CD8-positive, alpha-beta T cell (primary cell): ENCODE measurements at regions of chr1 and their contacts with region 1.

Region 1: GRCh38 chr1:48109390-48110013 is 112.3 kb upstream of the TRABD2B start:
- DNase-seq: peak in 2 of 9 experiments; percentile 37 to 50
- ATAC-seq: no peak
- H3K4me3 ChIP-seq: no peak overlapping the region
- H3K4me3 Mint-ChIP-seq: no peak overlapping the region
- H3K27ac ChIP-seq: no peak overlapping the region
- H3K27ac Mint-ChIP-seq: no peak overlapping the region
- H3K4me1 ChIP-seq: no peaks in the 10 kb centered on the region
- H3K4me1 Mint-ChIP-seq: no peaks in the 10 kb centered on the region
- H3K27me3 ChIP-seq: no peaks in the 10 kb centered on the region
- H3K27me3 Mint-ChIP-seq: peaks cover 14% of the 10 kb centered on the region
- CTCF ChIP-seq: peak; percentile 60

Region 2: DNA sequence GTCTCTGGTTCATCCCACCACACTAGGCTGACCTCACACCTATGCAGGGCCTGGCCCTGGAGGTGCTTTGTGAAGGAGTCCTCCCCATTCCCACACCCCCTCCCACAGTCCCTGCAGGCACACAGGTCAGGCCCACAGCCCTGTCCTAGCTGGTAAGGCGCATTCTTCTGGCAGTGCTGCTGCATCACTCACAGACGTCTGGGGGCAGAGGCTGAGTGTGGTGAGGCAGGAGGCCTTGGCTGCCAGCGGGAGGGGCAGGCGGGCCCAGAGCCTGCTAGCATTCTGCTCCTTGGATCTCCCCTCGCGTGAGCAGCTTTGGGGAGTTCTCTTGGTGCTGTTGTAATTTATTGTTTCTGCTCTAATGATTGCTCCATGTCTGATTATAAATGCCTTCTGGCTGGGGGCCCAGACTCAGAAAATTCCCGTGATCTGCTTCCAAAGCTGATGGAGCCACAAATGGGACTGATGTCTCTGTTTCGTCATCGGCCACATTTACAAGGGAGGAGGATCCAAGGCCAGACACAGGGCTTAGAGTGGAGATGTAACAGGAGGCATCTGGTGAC is 175.2 kb before region 1 on chr1:
- CTCF ChIA-PET with region 1: no interaction called
- POLR2A ChIA-PET with region 1: no interaction called
- intact Hi-C with region 1: no loop called
- DNase-seq: no peak
- ATAC-seq: no peak
- H3K4me3 ChIP-seq: no peak overlapping the region
- H3K4me3 Mint-ChIP-seq: no peak overlapping the region
- H3K27ac ChIP-seq: no peak overlapping the region
- H3K27ac Mint-ChIP-seq: no peak overlapping the region
- H3K4me1 ChIP-seq: no peaks in the 10 kb centered on the region
- H3K4me1 Mint-ChIP-seq: no peaks in the 10 kb centered on the region
- H3K27me3 ChIP-seq: peaks cover 0 to 3% of the 10 kb centered on the region in 2 experiments
- H3K27me3 Mint-ChIP-seq: peaks cover 11% of the 10 kb centered on the region
- CTCF ChIP-seq: no peak

Region 3: DNA sequence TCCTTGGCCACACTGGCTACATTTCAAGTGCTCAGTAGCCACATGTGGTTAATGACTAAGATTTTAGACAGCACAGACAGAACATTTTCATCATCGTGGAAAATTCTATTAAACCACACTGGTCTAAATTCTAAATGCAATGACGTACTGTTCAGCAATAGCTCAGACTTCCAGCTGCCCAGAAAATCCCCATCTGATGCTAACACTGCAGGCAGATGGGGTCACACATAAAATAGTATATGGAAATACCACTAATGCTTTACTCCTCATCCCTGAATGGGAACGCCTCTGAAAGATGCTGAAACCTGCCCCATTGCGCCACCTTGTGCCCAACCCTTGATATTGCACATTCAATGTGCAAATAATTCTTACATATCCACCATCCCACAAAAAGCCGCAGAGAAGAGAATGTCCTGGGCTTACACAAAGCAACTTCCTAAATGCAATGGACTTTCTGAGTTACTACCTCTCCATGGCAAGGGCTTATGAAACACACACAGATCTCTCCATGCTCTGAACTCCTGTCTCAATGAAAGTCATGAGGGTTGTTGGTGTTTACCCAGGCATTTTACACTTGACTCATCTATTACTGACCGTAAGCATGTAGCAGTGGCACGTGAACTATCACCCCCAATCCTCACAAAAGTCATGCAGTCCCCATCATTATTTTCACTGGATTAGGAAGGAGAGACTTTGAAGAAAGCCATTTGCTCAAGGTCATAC is 92.7 kb after region 1 on chr1:
- CTCF ChIA-PET with region 1: interaction called, 5 read pairs
- POLR2A ChIA-PET with region 1: no interaction called
- intact Hi-C with region 1: loop called in 1 of 2 experiments (anchors 1 kb)
- DNase-seq: peak; percentile 18 to 67 (median 53)
- ATAC-seq: no peak
- H3K4me3 ChIP-seq: no peak overlapping the region
- H3K4me3 Mint-ChIP-seq: no peak overlapping the region
- H3K27ac ChIP-seq: no peak overlapping the region
- H3K27ac Mint-ChIP-seq: no peak overlapping the region
- H3K4me1 ChIP-seq: no peaks in the 10 kb centered on the region
- H3K4me1 Mint-ChIP-seq: no peaks in the 10 kb centered on the region
- H3K27me3 ChIP-seq: no peaks in the 10 kb centered on the region
- H3K27me3 Mint-ChIP-seq: peaks cover 7% of the 10 kb centered on the region
- CTCF ChIP-seq: peak; percentile 95

Region 4: DNA sequence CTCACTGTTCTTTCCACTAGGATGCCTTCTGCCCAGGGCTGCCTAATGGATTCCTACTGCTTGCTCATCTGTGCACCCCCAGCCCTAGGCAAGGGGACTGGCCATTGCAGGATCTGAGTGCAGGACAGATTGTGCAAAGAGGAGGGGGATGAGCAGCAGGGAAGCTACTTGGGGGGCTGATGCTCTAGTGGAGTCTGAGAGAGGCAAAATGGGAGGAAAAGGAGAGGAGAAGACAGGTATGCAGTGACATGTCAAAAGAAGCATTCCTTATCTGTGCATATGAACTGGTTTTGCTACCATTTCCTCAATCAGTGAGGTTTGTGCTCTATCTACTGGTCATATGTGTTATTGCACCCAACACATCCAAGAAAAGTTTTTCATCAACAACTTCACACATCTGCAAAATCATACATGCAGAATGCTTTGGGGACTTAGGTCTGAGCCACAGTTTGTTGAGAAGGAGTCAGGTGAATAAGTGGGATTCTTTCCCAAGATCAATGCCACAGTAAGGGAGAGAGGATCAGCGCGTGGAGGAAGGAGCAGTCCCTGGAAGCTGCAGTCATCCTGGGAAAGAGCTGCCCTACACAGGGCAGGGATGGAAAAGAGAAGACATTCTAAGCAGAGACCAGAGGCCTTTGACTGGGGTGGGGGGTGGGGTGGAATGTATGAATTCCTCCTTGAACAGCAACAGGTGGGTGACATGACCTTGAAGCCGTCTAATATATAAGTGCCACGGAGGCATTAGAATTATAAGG is 127.4 kb after region 1 on chr1:
- CTCF ChIA-PET with region 1: interaction called, 20 read pairs
- POLR2A ChIA-PET with region 1: no interaction called
- intact Hi-C with region 1: loop called (anchors 1 to 5 kb)
- DNase-seq: peak in 2 of 9 experiments; percentile 53 to 63
- ATAC-seq: peak; percentile 34
- H3K4me3 ChIP-seq: no peak overlapping the region
- H3K4me3 Mint-ChIP-seq: no peak overlapping the region
- H3K27ac ChIP-seq: no peak overlapping the region
- H3K27ac Mint-ChIP-seq: no peak overlapping the region
- H3K4me1 ChIP-seq: no peaks in the 10 kb centered on the region
- H3K4me1 Mint-ChIP-seq: no peaks in the 10 kb centered on the region
- H3K27me3 ChIP-seq: no peaks in the 10 kb centered on the region
- H3K27me3 Mint-ChIP-seq: no peaks in the 10 kb centered on the region
- CTCF ChIP-seq: peak; percentile 79

Region 5: DNA sequence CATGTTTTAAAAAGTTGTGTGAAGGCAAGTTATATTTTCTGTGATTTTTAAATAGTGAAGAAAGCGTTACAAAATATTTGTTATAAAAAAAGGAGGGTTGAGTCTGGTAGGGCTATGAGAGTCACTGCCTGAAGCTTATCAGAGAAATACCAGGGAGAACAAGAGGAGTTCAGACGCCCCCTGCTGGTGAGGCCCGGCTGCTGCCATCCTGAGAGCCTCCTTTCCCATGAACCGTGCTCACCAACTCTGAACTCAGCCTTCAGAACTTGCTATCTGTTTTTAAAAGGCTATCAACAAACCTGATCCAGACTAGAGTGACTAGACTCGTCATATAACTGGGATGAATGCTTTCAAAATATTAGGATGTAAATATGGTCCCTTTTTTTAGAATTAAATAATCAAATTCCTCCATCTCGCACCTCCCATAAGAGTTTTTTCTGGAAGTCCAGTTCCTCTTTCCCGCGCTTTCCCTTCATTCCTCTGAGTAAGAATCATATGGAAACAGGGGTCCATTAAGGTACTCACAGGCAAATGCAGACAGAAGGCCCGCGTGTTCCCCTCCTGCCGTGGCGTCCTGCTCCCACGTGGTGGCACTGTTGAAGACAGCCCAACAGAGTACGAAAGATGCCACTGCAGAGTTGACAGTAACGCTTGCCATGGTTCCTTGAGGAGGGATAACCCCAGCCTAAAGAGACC is 388.7 kb after region 1 on chr1:
- CTCF ChIA-PET with region 1: interaction called, 3 read pairs
- POLR2A ChIA-PET with region 1: no interaction called
- intact Hi-C with region 1: loop called in 1 of 2 experiments (anchors 2 kb)
- DNase-seq: peak; percentile 28 to 76 (median 65)
- ATAC-seq: peak; percentile 75
- H3K4me3 ChIP-seq: no peak overlapping the region
- H3K4me3 Mint-ChIP-seq: peak overlapping the region; percentile 20
- H3K27ac ChIP-seq: no peak overlapping the region
- H3K27ac Mint-ChIP-seq: no peak overlapping the region
- H3K4me1 ChIP-seq: peaks cover 4% of the 10 kb centered on the region
- H3K4me1 Mint-ChIP-seq: peaks cover 4% of the 10 kb centered on the region
- H3K27me3 ChIP-seq: no peaks in the 10 kb centered on the region
- H3K27me3 Mint-ChIP-seq: no peaks in the 10 kb centered on the region
- CTCF ChIP-seq: peak; percentile 89